Activated naive CD4-positive, alpha-beta T cell treated with anti-CD3 and anti-CD28 coated beads for 36 hours (primary cell): ENCODE measurements at regions of chr3 and their contacts with region 1.

Region 1: DNA sequence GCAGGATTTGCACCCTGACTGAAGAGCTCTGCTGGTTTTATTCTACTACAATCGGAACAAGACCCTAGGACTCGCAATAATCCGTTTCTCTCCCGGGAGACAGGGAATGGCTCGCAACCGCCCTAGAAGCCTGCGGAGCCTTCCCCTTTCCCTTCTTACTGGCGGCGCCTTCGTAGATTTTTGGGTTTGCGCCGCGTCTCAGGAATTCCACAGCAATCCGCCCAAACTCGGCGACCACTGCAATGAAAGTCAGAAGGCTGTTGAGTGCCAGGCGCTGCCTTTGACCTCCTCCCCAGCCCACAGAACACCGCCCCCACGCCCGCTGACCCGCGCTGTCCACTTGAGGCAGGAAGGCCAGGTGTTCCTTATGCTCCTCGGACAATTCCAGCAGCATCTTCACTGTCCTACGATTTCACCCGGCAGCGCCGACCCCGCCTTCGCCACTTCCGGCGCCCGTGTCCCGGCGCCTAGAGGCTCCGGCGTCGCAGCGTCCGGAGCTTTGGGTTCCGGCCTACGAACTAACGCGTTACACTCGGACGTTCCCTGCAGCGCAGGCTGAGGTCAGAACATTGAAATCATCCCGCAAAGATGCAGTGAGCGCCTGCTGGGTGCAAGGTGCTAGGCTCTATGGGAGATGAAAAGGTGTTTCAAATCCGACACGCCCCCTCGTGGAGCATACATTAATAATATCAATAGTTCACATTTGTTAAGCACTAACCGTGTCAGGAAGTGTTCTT is at the start of gene COMMD2:
- DNase-seq: peak; percentile 89
- H3K4me3 Mint-ChIP-seq: peak within 1 kb of the TSS; percentile 96
- H3K27ac Mint-ChIP-seq: peak within 1 kb of the TSS; percentile 87
- H3K4me1 Mint-ChIP-seq: peaks cover 26% of the 10 kb centered on the region
- H3K27me3 Mint-ChIP-seq: no peaks in the 10 kb centered on the region
- total RNA-seq, gene COMMD2: 27.3 to 28.0 TPM

Region 2: GRCh38 chr3:149129326-149130205 is 622.7 kb before region 1 on chr3 and contains the start of gene HPS3:
- CTCF ChIA-PET with region 1: no interaction called
- intact Hi-C with region 1: loop called (anchors 5 kb)
- DNase-seq: peak; percentile 79
- H3K4me3 Mint-ChIP-seq: peak within 1 kb of the TSS; percentile 82
- H3K27ac Mint-ChIP-seq: peak within 1 kb of the TSS; percentile 25
- H3K4me1 Mint-ChIP-seq: peaks cover 29% of the 10 kb centered on the region
- H3K27me3 Mint-ChIP-seq: peaks cover 2% of the 10 kb centered on the region
- total RNA-seq, gene HPS3: 11.5 to 13.5 TPM

Region 3: GRCh38 chr3:149512209-149512782 is 239.9 kb before region 1 on chr3:
- CTCF ChIA-PET with region 1: interaction called, 5 read pairs
- intact Hi-C with region 1: loop called (anchors 1 kb)
- DNase-seq: peak; percentile 59
- H3K4me3 Mint-ChIP-seq: no peak overlapping the region
- H3K27ac Mint-ChIP-seq: no peak overlapping the region
- H3K4me1 Mint-ChIP-seq: peaks cover 14% of the 10 kb centered on the region
- H3K27me3 Mint-ChIP-seq: peaks cover 15% of the 10 kb centered on the region

Region 4: DNA sequence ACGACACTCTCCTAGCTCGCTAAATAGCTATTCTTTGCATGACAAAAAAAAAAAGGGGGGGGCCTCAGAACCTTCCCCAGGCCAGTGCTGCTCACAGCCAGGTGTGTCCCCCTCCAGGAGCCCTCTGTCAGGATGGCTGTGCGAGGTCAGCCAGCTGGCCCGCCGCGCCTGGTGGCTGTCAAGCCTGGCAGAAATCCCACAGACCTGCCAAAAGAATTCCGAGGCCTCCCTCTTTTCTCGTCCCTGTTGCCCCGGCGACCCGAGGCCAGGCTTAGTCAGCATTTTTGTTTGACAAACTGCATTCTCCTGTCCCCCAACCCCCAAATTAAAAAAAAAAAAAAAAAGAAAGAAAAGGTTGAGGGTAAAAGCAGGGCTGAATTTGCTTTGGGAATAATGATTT is 215.8 kb before region 1 on chr3:
- CTCF ChIA-PET with region 1: interaction called, 10 read pairs
- intact Hi-C with region 1: no loop called
- DNase-seq: no peak
- H3K4me3 Mint-ChIP-seq: no peak overlapping the region
- H3K27ac Mint-ChIP-seq: no peak overlapping the region
- H3K4me1 Mint-ChIP-seq: peaks cover 3% of the 10 kb centered on the region
- H3K27me3 Mint-ChIP-seq: peaks cover 7% of the 10 kb centered on the region

Region 5: GRCh38 chr3:149657926-149658733 is 94.1 kb before region 1 on chr3 and contains the start of gene WWTR1:
- CTCF ChIA-PET with region 1: interaction called, 4 read pairs
- intact Hi-C with region 1: loop called (anchors 2 kb)
- DNase-seq: peak; percentile 59
- H3K4me3 Mint-ChIP-seq: peak within 1 kb of the TSS; percentile 81
- H3K27ac Mint-ChIP-seq: no peak within 1 kb of the TSS
- H3K4me1 Mint-ChIP-seq: peaks cover 11% of the 10 kb centered on the region
- H3K27me3 Mint-ChIP-seq: peaks cover 67% of the 10 kb centered on the region
- total RNA-seq, gene WWTR1: 0.19 to 0.42 TPM

Region 6: DNA sequence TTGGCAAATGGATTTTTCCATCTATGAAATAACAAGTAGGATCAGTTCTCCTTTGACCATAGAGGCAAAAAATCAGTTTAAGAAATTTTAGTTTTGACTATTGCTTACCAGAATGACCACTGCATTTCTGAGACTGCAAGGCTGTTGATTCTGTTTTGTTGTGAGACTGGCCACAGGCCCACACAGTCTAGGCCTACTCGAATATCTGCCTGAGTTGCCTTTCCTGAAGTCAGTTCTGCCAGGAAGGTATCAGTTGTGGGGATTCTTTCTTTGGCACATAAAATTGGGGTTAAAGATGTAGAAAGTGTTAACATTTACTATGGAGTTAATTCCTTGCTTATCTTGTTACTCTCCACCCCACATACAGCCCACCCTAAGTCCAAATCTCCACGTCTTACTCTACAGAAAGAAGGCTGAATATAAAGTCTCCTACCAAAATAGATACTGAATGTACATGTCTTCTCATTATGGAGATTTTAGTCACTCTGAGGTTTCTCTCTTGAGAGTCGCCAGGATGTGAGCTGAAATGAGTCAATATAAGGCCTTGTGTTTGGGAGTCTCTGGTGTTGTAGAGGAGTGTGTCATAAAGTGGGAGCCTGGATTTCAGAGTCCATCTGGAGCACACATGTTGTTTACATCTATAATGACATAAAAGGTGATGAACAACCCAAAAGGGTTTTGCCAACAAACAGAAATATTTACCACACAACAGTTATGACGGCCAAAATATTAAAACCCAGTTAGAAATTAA is 49.4 kb before region 1 on chr3:
- CTCF ChIA-PET with region 1: no interaction called
- intact Hi-C with region 1: loop called (anchors 5 kb)
- DNase-seq: no peak
- H3K4me3 Mint-ChIP-seq: no peak overlapping the region
- H3K27ac Mint-ChIP-seq: no peak overlapping the region
- H3K4me1 Mint-ChIP-seq: peaks cover 3% of the 10 kb centered on the region
- H3K27me3 Mint-ChIP-seq: no peaks in the 10 kb centered on the region

Region 7: DNA sequence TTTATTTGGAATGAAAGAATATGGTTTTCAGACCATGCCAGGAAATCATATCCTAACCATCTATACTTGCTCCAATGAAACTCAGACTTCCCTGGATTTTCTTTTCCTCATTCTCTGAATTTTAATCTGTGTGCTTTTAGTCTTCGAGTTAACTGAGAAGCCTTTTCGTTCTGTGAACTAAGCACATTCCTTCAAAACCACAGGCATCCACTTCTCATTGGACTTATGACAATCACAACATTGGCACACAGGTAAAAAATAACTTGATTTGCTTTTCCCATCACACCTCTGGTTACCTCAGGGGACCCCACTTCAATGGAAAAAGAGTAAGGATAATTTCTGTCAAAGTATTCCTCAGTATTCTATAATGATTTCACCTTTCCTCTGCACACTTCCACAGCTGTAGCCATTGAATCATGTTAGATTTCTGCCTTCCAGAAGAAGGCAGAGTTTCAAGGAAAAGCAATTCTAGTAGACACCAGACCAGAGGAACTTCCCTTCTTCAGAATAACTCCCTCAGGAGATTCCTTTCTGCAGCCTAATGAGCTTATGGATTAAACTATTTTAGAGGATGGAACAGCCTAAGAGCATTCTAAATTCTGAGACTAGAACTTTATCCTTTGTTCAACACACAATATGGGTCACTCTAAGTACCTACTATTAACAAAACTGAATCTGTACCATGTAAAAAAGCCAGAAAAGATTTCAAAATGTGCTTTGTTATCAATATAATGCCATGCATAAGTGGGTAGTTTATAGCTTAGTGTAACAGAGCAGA is 15.9 kb before region 1 on chr3:
- CTCF ChIA-PET with region 1: no interaction called
- intact Hi-C with region 1: no loop called
- DNase-seq: no peak
- H3K4me3 Mint-ChIP-seq: no peak overlapping the region
- H3K27ac Mint-ChIP-seq: no peak overlapping the region
- H3K4me1 Mint-ChIP-seq: no peaks in the 10 kb centered on the region
- H3K27me3 Mint-ChIP-seq: no peaks in the 10 kb centered on the region